Calu3 (cell line): ENCODE measurements at regions of chr2 and their contacts with region 1.

Region 1: GRCh38 chr2:101793277-101793969 is 95.9 kb downstream of the MAP4K4 start:
- DNase-seq: no peak
- H3K4me3 Mint-ChIP-seq: no peak overlapping the region
- H3K27ac Mint-ChIP-seq: no peak overlapping the region
- H3K4me1 Mint-ChIP-seq: peaks cover 34% of the 10 kb centered on the region
- H3K27me3 Mint-ChIP-seq: no peaks in the 10 kb centered on the region
- CTCF ChIP-seq: no peak

Region 2: GRCh38 chr2:101736861-101737291 is 56.5 kb before region 1 on chr2:
- CTCF ChIA-PET with region 1: no interaction called
- intact Hi-C with region 1: loop called (anchors 1 kb)
- DNase-seq: no peak
- H3K4me3 Mint-ChIP-seq: peak overlapping the region; percentile 45
- H3K27ac Mint-ChIP-seq: peak overlapping the region; percentile 77
- H3K4me1 Mint-ChIP-seq: peaks cover 65% of the 10 kb centered on the region
- H3K27me3 Mint-ChIP-seq: no peaks in the 10 kb centered on the region
- CTCF ChIP-seq: no peak

Region 3: DNA sequence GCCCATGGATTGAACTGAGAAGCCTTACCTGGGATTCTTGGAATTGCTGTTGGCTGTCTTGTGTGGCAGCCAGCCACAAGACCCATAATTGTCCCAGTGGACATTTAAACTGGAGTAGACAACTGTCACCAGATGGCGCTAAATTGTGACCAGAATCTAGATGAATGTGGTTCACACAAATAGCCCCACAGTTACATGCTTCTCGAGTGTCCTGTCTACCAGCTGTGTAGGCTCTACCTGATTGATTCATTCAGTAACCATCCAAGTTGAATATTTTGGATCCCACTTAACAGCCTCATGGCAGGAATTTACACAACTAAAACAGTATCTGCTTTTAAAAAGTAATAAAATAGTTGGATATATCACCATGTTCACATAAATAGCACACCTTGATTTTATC is 22.7 kb before region 1 on chr2:
- CTCF ChIA-PET with region 1: no interaction called
- intact Hi-C with region 1: loop called (anchors 2 kb)
- DNase-seq: peak; percentile 51
- H3K4me3 Mint-ChIP-seq: no peak overlapping the region
- H3K27ac Mint-ChIP-seq: peak overlapping the region; percentile 61
- H3K4me1 Mint-ChIP-seq: peaks cover 58% of the 10 kb centered on the region
- H3K27me3 Mint-ChIP-seq: no peaks in the 10 kb centered on the region
- CTCF ChIP-seq: no peak

Region 4: GRCh38 chr2:101844055-101844635 is 50.7 kb after region 1 on chr2:
- CTCF ChIA-PET with region 1: no interaction called
- intact Hi-C with region 1: no loop called
- DNase-seq: no peak
- H3K4me3 Mint-ChIP-seq: no peak overlapping the region
- H3K27ac Mint-ChIP-seq: no peak overlapping the region
- H3K4me1 Mint-ChIP-seq: peaks cover 19% of the 10 kb centered on the region
- H3K27me3 Mint-ChIP-seq: no peaks in the 10 kb centered on the region
- CTCF ChIP-seq: no peak